A673 (cell line): ENCODE measurements at regions of chr4 and their contacts with region 1.

Region 1: GRCh38 chr4:39539089-39539700 is 12.0 kb upstream of the UGDH start:
- DNase-seq: no peak
- H3K4me3 ChIP-seq: no peak overlapping the region
- H3K27ac ChIP-seq: no peak overlapping the region
- H3K4me1 ChIP-seq: no peaks in the 10 kb centered on the region
- H3K27me3 ChIP-seq: no peaks in the 10 kb centered on the region
- CTCF ChIP-seq: no peak

Region 2: DNA sequence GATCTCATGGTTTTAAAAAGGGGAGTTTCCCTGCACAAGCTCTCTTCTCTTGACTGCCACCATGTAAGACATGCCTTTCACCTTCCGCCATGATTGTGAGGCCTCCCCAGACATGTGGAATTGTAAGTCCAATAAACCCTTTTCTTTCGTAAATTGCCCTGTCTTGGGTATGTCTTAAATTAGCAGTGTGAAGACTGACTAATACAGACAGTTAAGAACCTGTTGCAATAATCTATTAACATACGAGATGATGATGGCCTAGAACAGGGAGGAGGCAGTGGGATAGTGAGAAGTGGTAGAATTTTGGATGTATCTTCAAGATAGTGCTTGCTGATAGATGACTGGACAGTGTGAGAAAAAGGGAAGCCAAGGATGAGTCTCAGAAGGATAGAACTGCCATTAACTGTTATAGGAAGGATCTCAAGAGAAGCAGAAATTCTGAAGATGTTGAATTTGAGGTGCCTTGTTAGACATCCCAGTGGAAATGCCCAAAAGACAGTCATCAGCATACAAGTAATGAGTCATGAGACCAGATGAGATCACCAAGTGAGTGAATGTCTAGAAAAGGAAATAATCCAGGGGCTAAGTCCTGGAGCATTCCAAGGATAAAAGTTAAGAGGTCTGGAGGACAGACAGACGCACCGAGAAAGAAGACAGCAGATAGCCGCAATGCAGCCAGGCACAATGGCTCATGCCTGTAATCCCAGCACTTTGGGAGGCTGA is 26.8 kb after region 1 on chr4:
- CTCF ChIA-PET with region 1: no interaction called
- POLR2A ChIA-PET with region 1: interaction called, 12 read pairs
- intact Hi-C with region 1: no loop called
- DNase-seq: no peak
- H3K4me3 ChIP-seq: no peak overlapping the region
- H3K27ac ChIP-seq: no peak overlapping the region
- H3K4me1 ChIP-seq: no peaks in the 10 kb centered on the region
- H3K27me3 ChIP-seq: no peaks in the 10 kb centered on the region
- CTCF ChIP-seq: no peak

Region 3: DNA sequence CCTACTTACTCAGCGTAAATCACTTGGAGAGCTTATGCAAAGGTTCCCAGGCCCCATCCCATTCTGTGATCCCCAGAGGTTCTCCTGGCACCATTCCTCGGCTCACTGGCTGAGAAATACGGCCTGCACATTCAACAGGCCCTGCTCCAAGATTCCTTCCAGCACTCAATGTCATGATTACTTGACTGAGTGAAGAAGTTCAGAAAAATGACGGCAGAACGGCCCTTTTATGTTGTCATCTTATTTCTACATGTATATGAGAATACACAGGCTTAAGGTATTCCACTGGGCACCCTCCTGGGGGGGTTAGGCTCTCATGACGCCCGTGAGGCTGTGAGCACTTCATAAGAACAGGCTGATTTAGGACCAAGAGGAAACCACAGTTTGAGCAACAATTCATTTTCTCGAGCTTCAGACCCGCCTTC is 1401.1 kb after region 1 on chr4:
- CTCF ChIA-PET with region 1: no interaction called
- POLR2A ChIA-PET with region 1: no interaction called
- intact Hi-C with region 1: no loop called
- DNase-seq: no peak
- H3K4me3 ChIP-seq: no peak overlapping the region
- H3K27ac ChIP-seq: no peak overlapping the region
- H3K4me1 ChIP-seq: no peaks in the 10 kb centered on the region
- H3K27me3 ChIP-seq: no peaks in the 10 kb centered on the region
- CTCF ChIP-seq: no peak